ENCODE measurements at regions of chr13 and their contacts with region 1.

Region 1: DNA sequence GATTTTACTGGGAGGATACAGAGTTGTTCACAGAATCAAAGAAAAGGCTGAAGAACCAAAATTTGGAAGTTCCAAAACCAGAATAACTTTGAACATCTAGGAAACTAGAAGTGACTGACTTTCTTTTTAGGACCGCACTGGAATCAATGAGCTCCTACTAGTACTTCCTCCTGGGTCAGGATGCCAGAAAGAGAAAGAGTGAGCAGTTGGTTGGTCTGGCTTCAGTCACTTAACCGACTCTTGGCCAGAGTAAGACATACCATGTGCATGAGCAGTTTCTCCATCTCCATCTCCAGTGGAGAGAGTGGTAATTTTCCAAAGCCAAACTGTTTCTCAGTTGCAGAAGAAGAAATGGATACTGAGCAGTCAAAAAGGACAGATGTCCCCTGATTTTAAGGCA is 27.1 kb upstream of the MTUS2 start:
- DNase-seq: peak; percentile 63
- H3K4me3 ChIP-seq: no peak overlapping the region
- CTCF ChIP-seq: no peak

Region 2: DNA sequence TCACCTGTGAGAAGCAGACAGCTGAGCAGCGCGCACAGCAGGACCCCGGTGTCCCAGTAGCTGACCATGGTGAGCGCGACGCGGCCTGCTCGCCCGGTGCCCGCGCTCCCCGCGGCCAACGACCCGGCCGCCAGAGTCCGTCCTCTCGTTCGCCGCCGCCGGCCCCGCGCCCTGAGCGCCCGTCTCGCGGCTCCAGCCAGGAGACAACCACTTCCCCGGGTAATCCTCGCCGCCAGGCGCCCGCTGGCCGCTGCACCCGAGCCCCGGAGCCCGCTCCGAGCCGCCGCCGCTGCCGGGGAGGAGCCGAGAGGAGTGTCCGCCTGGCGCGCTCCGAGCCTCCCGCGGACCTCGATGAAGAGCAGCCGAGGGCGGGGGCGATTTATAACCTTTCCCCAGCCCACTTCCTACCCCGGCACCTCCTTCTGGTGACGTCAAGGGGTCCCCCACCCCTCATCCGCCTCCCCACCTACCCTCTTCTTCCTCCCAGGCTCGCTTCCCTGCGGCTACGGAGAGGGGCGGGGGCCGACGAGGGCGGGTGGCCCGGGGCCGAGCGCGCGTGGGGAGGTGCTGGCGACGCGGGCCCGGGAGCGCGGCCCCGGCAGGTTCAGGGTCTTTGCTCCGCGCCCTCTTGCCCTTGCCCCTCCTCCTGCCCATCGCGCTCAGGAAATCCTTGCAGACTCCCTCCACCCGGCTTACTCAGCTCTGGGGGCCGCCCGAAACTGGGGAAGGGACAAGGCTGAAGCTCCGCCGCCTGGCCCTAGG is 298.0 kb before region 1 on chr13 and contains the start of gene FLT1:
- CTCF ChIA-PET with region 1: no interaction called
- POLR2A ChIA-PET with region 1: no interaction called
- DNase-seq: no peak
- H3K4me3 ChIP-seq: peak within 1 kb of the TSS; percentile 64
- CTCF ChIP-seq: no peak

Region 3: GRCh38 chr13:28658796-28659620 is 134.0 kb before region 1 on chr13 and contains the start of gene POMP:
- CTCF ChIA-PET with region 1: interaction called, 12 read pairs
- POLR2A ChIA-PET with region 1: no interaction called
- DNase-seq: peak; percentile 80
- H3K4me3 ChIP-seq: peak within 1 kb of the TSS; percentile 97
- CTCF ChIP-seq: no peak

Region 4: DNA sequence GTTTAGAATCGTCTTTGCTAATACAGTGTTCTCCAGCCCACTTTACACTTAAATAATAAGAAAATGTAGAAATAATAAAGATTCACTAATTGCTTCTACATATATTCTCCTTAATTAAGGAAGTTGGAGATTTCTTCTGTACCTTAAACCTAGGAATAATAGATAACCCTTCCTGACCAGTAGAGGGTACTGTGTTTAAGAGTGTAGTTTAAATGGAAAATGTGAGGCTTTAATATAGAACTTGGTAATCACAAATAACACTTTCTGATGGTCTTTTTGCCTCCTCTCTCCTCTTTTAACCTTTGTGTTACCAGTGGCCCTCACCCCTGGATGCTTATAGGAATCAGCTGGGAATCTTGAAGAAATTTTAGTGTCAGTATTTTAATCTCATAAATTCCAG is 113.4 kb before region 1 on chr13:
- CTCF ChIA-PET with region 1: interaction called, 203 read pairs
- POLR2A ChIA-PET with region 1: interaction called, 3 read pairs
- DNase-seq: no peak
- H3K4me3 ChIP-seq: no peak overlapping the region
- CTCF ChIP-seq: peak; percentile 31

Region 5: GRCh38 chr13:28976195-28976594 is 183.2 kb after region 1 on chr13:
- CTCF ChIA-PET with region 1: no interaction called
- POLR2A ChIA-PET with region 1: no interaction called
- DNase-seq: no peak
- H3K4me3 ChIP-seq: no peak overlapping the region
- CTCF ChIP-seq: no peak

Region 6: GRCh38 chr13:29111446-29111845 is 318.5 kb after region 1 on chr13:
- CTCF ChIA-PET with region 1: no interaction called
- POLR2A ChIA-PET with region 1: no interaction called
- DNase-seq: no peak
- H3K4me3 ChIP-seq: no peak overlapping the region
- CTCF ChIP-seq: no peak